ENCODE measurements at regions of chr6 and their contacts with region 1.

Region 1: GRCh38 chr6:32700391-32701040 is 34.1 kb upstream of the HLA-DQB1 start:
- DNase-seq: peak in 6 of 9 experiments; percentile 2 to 71 (median 46)
- ATAC-seq: peak; percentile 49
- H3K4me3 ChIP-seq: no peak overlapping the region
- H3K4me3 Mint-ChIP-seq: no peak overlapping the region
- H3K27ac ChIP-seq: no peak overlapping the region
- H3K27ac Mint-ChIP-seq: no peak overlapping the region
- H3K4me1 ChIP-seq: no peaks in the 10 kb centered on the region
- H3K4me1 Mint-ChIP-seq: peaks cover 4% of the 10 kb centered on the region
- H3K27me3 ChIP-seq: no peaks in the 10 kb centered on the region
- H3K27me3 Mint-ChIP-seq: peaks cover 40% of the 10 kb centered on the region
- CTCF ChIP-seq: peak; percentile 86

Region 2: DNA sequence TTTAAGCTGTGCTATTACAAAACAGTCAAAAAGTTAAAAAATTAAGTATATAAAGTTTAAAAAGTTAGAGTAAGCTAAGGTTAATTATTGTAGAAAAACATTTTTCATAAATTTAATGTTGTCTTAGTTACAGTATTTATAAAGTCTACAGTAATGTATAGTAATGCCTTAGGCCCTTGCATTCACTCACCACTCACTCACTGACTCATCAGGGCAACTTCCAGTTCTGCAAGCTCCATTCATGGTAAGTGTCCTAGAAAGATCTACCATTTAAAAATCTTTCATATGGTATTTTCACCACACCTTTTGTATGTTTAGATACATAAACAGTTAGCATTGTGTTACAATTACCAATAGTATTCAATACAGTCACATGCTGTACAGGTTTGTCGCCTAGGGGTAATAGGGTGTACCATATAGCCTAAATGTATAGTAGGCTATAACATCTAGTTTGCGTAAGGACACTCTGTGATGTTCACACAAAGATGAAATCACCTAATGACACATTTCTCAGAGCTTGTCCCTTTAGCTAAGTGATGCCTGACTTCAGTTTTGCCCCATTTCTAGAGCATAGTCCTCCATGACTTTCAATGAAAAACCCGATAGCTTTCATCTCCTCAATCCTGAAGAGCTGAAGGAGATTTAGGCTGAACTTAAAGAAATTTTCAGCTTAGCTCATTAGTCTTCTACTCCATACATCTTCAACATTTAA is 275.8 kb before region 1 on chr6:
- CTCF ChIA-PET with region 1: interaction called, 15 read pairs
- POLR2A ChIA-PET with region 1: no interaction called
- intact Hi-C with region 1: no loop called
- DNase-seq: no peak
- ATAC-seq: no peak
- H3K4me3 ChIP-seq: no peak overlapping the region
- H3K4me3 Mint-ChIP-seq: no peak overlapping the region
- H3K27ac ChIP-seq: no peak overlapping the region
- H3K27ac Mint-ChIP-seq: no peak overlapping the region
- H3K4me1 ChIP-seq: no peaks in the 10 kb centered on the region
- H3K4me1 Mint-ChIP-seq: no peaks in the 10 kb centered on the region
- H3K27me3 ChIP-seq: no peaks in the 10 kb centered on the region
- H3K27me3 Mint-ChIP-seq: peaks cover 18% of the 10 kb centered on the region
- CTCF ChIP-seq: no peak

Region 3: GRCh38 chr6:32432050-32432450 is 268.5 kb before region 1 on chr6:
- CTCF ChIA-PET with region 1: interaction called, 39 read pairs
- POLR2A ChIA-PET with region 1: no interaction called
- intact Hi-C with region 1: loop called (anchors 1 kb)
- DNase-seq: peak in 2 of 9 experiments; percentile 52 to 65
- ATAC-seq: peak; percentile 36
- H3K4me3 ChIP-seq: no peak overlapping the region
- H3K4me3 Mint-ChIP-seq: no peak overlapping the region
- H3K27ac ChIP-seq: no peak overlapping the region
- H3K27ac Mint-ChIP-seq: no peak overlapping the region
- H3K4me1 ChIP-seq: no peaks in the 10 kb centered on the region
- H3K4me1 Mint-ChIP-seq: no peaks in the 10 kb centered on the region
- H3K27me3 ChIP-seq: no peaks in the 10 kb centered on the region
- H3K27me3 Mint-ChIP-seq: peaks cover 13% of the 10 kb centered on the region
- CTCF ChIP-seq: peak; percentile 63

Region 4: DNA sequence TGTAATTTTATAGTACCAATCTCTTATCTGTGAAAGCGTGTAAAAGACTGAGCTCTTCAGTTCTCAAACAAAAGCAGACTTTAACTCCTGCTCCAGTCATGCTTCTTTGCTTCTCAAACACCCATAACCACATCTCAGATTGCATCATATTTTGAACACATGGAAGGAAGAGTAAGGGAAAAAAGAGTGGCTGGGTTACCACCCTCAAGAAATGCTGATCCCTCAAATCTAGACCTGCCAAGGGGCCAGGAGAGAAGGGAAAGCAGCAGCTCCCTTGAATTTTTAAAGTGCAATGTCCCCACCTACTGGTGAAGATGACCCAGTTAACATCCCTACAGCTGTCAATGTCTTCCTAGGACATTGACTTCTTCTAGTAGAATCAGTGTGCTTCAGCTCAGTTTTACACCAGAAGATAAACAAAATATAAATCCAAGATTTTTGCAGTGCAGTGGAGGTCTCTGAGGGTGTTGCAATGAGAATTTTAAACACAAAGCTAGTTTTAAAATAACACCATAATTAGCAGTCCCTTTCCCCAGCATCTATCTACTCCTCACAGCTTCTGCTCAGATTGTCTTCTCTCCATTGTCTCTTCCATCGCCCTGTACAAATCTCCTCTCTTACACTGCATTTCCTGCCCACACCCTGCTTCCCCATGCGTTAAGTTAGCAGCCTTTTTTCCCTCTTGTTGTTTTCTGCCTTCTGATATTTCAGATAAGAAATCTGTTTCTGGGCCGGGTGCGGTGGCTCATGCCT is 85.4 kb after region 1 on chr6:
- CTCF ChIA-PET with region 1: interaction called, 12 read pairs
- POLR2A ChIA-PET with region 1: no interaction called
- intact Hi-C with region 1: no loop called
- DNase-seq: peak in 5 of 9 experiments; percentile 19 to 66 (median 30)
- ATAC-seq: peak; percentile 52
- H3K4me3 ChIP-seq: no peak overlapping the region
- H3K4me3 Mint-ChIP-seq: no peak overlapping the region
- H3K27ac ChIP-seq: no peak overlapping the region
- H3K27ac Mint-ChIP-seq: no peak overlapping the region
- H3K4me1 ChIP-seq: no peaks in the 10 kb centered on the region
- H3K4me1 Mint-ChIP-seq: no peaks in the 10 kb centered on the region
- H3K27me3 ChIP-seq: peaks cover 0 to 7% of the 10 kb centered on the region in 2 experiments
- H3K27me3 Mint-ChIP-seq: peaks cover 35% of the 10 kb centered on the region
- CTCF ChIP-seq: peak; percentile 68